Right ventricle myocardium inferior (tissue), 1 donor: ENCODE measurements at regions of chr12 and their contacts with region 1.

Region 1: GRCh38 chr12:11171145-11171968 is at the start of gene SMIM10L1:
- DNase-seq: peak; percentile 95
- ATAC-seq: peak; percentile 100
- total RNA-seq, gene SMIM10L1: 14.6 TPM

Region 2: DNA sequence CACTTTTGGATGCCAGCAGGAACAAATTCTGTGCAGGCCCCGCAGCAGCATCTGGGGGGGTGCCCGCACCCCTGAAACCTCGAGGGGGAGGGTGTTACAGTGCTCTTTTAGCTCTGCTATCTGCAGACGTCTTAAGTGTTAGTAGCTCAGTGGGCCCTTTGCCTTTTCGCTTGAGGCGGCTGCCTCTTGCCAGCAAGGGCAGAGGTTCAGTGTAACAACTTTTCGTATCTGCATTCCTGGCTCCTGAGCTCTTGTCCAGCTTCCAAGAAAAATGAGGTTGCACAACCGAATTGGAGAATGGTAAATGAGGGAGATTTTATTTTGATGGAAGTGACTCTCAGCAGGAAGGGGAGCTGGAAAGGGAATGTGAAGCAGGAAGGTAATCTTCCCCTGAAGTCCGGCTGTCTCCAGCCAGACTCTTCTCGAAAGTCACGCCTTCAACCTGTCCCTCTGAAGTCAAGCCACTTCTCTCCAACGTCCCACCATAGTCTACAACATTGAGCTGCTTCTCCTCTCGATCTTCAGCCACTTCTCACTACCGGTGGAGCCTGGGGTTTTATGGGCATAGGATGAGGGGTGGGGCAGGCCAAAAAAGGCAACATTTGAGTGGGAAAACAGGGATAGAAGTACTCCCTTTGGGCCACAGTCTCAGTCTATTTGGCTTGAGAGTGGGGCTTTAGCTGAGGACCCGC is 202.4 kb before region 1 on chr12:
- intact Hi-C with region 1: loop called (anchors 5 kb)
- DNase-seq: peak; percentile 66
- ATAC-seq: peak; percentile 72

Region 3: DNA sequence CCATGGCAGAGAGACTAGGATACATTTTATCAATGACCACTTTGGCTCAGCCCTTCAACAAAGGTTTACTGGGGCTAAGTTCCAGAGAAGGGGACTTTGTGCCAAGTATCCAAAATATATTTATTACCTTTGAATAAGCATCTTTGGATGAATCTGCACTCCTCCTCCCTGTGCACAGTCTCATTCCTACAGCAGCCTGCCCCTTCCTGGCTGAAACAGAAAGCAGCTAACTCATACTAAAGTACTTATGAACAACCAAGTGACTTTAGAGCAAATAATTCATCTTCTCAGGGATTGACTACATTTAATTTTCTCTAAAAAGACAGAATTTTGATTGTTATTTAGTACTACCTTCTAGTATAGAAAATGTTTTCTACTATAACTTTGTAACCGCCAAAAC is 430.3 kb after region 1 on chr12:
- intact Hi-C with region 1: no loop called
- DNase-seq: no peak
- ATAC-seq: no peak